Ovary (tissue), 10 donors: ENCODE measurements at regions of chrX and their contacts with region 1.

Region 1: GRCh38 chrX:49165901-49166881 is 3.6 kb downstream of the MAGIX start:
- DNase-seq: peak; percentile 79 to 86 (median 81)
- H3K4me3 ChIP-seq: peak overlapping the region; percentile 22
- H3K27ac ChIP-seq: peak overlapping the region; percentile 10 to 82
- H3K4me1 ChIP-seq: no peaks in the 10 kb centered on the region
- H3K27me3 ChIP-seq: no peaks in the 10 kb centered on the region
- CTCF ChIP-seq: peak in 1 of 3 donors; percentile 9
- EP300 ChIP-seq: no peak
- POLR2A ChIP-seq: no peak

Region 2: DNA sequence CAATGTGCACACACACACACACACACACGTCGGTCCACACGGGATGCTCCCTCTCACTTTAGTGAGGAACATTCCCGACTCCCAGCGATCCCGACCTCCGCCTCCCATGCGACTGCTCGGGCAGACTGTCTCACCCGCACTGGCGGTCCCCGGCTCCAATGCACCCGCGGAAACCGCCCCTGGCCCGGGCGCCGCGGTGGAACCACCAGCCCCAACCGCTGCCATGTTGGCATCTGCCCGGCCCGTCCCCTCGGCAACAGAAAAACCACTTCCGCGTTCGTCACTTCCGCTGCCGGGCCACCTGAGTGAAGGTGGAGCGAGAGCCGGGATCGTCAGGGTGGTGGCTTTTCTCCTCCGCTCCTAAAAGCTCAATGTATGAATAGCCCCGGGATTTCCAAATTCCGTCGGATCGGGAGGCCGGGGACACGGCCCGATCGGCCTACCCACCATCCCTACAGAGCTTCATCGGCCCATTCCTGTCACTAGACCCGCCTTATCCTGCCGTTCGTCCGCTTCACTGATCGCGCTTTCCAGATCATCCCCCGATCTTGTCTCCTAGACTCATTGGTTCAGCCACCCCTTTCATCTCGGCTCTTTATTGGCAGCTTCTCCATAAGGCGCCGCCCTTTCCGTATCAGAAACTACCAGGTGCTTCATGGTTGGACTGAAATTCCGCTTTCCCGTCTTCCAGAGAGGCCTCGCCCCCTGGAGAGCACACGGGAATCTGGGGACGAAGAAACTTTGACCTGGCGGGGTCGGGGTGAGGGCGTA is 254.6 kb before region 1 on chrX and contains the start of gene SLC35A2:
- intact Hi-C with region 1: loop called in 1 of 4 experiments (anchors 5 kb)
- DNase-seq: peak; percentile 78 to 85 (median 81)
- H3K4me3 ChIP-seq: peak within 1 kb of the TSS; percentile 54
- H3K27ac ChIP-seq: no peak within 1 kb of the TSS
- H3K4me1 ChIP-seq: peaks cover 2% of the 10 kb centered on the region
- H3K27me3 ChIP-seq: no peaks in the 10 kb centered on the region
- CTCF ChIP-seq: no peak
- EP300 ChIP-seq: no peak
- POLR2A ChIP-seq: peak; percentile 51
- total RNA-seq, gene SLC35A2: 8.2 to 18.8 (median 12.5) TPM

Region 3: DNA sequence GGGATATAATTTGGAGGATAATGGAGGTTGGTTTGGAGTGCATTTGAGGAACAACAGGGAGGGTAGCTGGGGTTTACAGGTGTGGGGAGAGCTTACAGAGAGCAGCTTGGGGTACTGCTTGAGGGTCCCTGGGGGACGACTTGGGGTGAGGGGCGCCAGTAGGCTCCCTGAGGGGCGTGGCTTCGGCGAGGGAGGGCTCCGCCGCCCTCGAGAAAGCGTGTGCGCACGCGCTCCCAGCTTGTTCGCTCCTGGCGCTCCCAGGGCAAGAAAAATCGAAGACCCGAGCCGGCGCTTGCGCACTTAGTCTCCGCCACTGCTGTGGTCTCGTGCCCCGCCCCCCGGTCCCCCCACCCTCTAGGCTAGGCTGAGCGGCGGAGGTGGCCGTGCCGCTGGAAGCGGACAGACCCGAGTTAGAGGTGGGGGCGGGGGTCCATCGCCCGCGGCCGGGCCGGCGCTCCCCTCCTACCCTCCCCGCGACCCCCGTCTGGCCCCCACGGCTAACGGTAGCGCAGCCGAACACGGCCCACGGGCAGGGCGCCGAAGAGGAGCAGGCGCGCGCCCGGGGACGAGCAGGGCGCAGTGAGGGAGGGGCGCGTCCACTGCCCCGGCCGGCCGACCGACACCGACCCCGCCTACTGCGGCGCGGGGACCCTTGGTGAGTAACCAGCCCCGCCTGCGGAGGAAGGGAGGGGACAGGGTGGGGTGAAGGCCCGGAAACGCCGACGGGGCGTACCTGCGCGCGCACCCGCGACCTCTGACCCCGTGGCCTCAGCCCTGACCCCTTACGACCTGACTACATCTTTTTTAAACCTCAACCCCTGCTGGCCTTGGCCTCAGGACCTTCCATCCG is 112.7 kb before region 1 on chrX:
- intact Hi-C with region 1: no loop called
- DNase-seq: peak; percentile 71 to 83 (median 75)
- H3K4me3 ChIP-seq: peak overlapping the region; percentile 64
- H3K27ac ChIP-seq: peak overlapping the region; percentile 86
- H3K4me1 ChIP-seq: no peaks in the 10 kb centered on the region
- H3K27me3 ChIP-seq: no peaks in the 10 kb centered on the region
- CTCF ChIP-seq: no peak
- EP300 ChIP-seq: no peak
- POLR2A ChIP-seq: peak; percentile 12